IMR-90 (cell line): ENCODE measurements at regions of chr6 and their contacts with region 1.

Region 1: DNA sequence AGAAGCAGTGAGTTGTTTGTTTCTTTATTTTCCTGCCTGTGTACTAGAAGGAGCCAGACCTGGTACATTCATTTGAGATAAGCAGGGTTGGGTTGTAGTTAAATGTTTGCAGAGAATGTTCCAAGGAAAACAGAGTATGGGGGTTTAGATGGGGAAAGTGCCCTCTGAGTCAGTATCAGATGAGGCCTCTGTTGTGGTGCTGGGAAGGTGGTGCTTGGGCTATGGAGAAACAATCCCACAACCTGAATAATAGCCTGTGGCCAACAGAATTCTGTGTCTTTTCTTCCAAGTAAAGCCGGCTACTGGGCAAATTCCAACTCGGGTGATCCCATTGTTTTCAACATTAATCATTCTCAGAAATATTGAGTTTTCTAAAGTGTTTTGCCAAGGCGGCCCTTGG is 109.3 kb downstream of the RNF144B start:
- DNase-seq: peak; percentile 19
- ATAC-seq: no peak
- H3K4me3 ChIP-seq: no peak overlapping the region
- H3K27ac ChIP-seq: no peak overlapping the region
- H3K4me1 ChIP-seq: peaks cover 1% of the 10 kb centered on the region; the same call in 1 of the 2 replicates
- H3K27me3 ChIP-seq: no peaks in the 10 kb centered on the region; the same call in none of the 2 replicates
- CTCF ChIP-seq: no peak
- POLR2A ChIP-seq: no peak
- RAD21 ChIP-seq: no peak

Region 2: GRCh38 chr6:18335948-18336347 is 160.5 kb before region 1 on chr6:
- CTCF ChIA-PET with region 1: no interaction called
- POLR2A ChIA-PET with region 1: no interaction called
- dilution Hi-C with region 1: no loop called
- in situ Hi-C with region 1: loop called (anchors 5 kb)
- intact Hi-C with region 1: no loop called
- DNase-seq: no peak
- ATAC-seq: no peak
- H3K4me3 ChIP-seq: no peak overlapping the region
- H3K27ac ChIP-seq: no peak overlapping the region
- H3K4me1 ChIP-seq: no peaks in the 10 kb centered on the region
- H3K27me3 ChIP-seq: no peaks in the 10 kb centered on the region
- CTCF ChIP-seq: no peak
- POLR2A ChIP-seq: no peak
- RAD21 ChIP-seq: no peak

Region 3: DNA sequence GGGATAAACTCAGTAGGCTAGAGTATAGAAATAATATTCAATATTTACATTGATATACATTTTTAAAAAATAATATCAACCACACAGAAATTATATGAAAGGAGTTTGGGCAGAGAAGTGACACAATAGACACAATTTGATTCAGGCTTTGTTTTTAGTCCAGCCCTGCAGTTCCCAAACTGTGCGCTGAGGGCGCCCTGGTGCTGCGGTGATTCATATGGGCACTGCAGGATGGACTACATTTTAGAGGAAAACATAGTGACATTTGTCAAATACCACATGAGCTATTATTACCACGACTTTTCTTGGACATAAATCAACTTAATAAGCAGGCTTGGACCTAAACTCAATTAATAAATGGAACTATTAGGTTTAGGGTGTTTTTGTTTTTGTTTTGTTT is 976.4 kb after region 1 on chr6:
- CTCF ChIA-PET with region 1: no interaction called
- POLR2A ChIA-PET with region 1: no interaction called
- dilution Hi-C with region 1: no loop called
- in situ Hi-C with region 1: no loop called
- intact Hi-C with region 1: no loop called
- DNase-seq: no peak
- ATAC-seq: no peak
- H3K4me3 ChIP-seq: no peak overlapping the region
- H3K27ac ChIP-seq: no peak overlapping the region
- H3K4me1 ChIP-seq: no peaks in the 10 kb centered on the region
- H3K27me3 ChIP-seq: no peaks in the 10 kb centered on the region
- CTCF ChIP-seq: no peak
- POLR2A ChIP-seq: no peak
- RAD21 ChIP-seq: 0 out of 2 replicates have a peak, but pooled peaks have one; percentile 8